ENCODE measurements at regions of chr11 and their contacts with region 1.

Region 1: DNA sequence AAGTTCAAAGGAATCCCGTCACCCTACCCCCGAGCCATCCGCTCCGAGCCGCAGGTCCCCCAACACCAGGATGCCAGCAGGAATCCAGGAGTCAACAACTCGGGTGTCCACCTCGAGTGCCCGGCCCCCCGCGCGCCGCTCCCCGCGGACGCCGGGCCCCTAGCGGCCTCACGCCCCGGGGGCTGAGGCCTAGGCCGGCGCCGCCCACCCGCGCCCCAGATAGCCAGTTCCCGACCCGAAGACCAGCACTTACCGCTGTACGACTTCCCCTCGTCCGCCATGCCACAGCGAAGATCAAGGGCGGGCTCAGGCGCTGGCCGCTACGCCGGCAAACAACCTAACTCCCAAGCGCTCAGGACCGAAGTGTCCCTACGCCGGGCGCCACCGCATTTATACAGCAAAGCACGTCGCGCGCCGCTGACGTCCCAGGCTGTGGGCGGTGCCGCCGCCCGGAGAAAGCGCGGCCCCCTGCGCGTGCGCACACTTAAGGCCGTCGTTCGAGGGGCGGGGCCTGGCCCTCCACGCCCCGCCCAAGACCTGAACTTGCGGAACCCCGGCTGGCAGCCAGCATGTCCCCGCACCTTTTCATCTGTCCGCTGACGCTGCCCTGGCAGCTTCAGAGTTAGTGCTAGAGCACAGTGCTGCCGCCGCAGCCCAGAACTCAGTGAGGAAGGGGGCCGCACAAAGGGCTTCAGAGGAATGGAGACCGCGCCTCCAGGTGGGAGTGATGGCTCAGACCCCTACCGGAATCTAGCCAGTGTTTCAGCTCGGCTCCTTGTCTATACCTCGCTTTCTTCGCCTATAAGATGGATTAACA is at the start of gene NXF1:
- DNase-seq: peak; percentile 93 to 97 (median 96)
- H3K4me3 ChIP-seq: peak within 1 kb of the TSS; percentile 82 to 99 (median 93)
- H3K27ac ChIP-seq: peak within 1 kb of the TSS; percentile 79 to 91
- H3K4me1 ChIP-seq: peaks cover 11 to 45% (median 24%) of the 10 kb centered on the region in 4 experiments
- H3K27me3 ChIP-seq: no peaks in the 10 kb centered on the region

Region 2: DNA sequence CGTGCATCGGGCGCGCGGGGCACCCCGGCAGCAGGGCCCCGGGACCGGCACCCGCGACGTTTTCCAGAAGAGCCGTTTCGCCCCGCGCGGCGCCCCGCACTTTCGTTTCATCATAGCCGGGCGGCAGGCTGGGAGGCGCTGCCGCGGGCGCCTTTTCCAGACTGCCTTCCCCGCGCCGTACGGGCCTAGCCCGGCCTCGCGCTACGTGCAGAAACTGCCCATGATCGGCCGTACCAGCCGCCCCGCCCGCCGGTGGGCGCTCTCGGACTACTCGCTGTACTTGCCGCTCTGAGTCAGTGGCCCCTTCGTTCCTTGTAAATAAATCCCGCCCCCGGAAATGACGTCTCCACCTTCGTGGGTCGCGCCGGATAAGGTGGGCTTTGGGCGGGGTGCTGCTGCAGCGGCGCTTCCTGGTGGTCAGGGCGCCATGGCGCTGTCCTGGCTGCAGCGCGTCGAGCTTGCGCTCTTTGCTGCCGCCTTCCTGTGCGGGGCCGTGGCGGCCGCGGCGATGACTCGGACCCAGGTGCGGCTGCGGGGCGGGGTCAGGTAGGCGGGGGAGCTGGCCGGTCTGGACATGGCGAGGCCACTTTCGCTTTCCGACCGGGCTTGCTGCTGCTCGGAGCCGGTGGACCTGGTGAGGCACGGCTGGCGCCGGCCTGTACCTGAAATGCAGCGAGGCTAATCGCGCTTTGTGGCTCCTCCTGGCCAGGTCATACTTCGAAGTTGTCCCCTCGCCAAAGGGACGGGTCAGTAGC is 18.1 kb before region 1 on chr11 and contains the start of gene TMEM179B:
- CTCF ChIA-PET with region 1: interaction called, 15 read pairs
- POLR2A ChIA-PET with region 1: interaction called, 11 read pairs
- DNase-seq: peak; percentile 98 to 99 (median 99)
- H3K4me3 ChIP-seq: peak within 1 kb of the TSS; percentile 75 to 100 (median 97)
- H3K27ac ChIP-seq: peak within 1 kb of the TSS; percentile 72 to 88
- H3K4me1 ChIP-seq: peaks cover 10 to 48% (median 40%) of the 10 kb centered on the region in 4 experiments
- H3K27me3 ChIP-seq: no peaks in the 10 kb centered on the region

Region 3: DNA sequence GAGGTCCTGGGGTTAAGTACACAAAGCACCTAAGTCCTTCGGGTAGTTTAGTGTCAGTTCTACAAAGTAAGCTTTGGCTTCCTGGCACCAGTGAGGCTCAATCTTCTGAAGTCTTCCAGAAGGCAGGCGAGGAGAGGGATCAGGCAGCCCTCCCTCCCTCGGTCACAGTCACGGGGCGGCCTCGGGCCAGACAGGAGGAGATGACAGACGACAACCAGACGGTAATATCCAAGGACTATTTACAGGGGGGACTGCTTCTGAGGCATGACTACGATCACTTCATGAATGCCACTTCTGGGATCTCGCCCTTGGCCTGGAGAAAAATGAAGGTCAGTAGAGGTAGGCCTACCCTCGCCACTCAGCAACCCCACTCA is 13.1 kb before region 1 on chr11:
- CTCF ChIA-PET with region 1: interaction called, 15 read pairs
- POLR2A ChIA-PET with region 1: interaction called, 16 read pairs
- DNase-seq: no peak
- H3K4me3 ChIP-seq: peak overlapping the region in 6 of 7 experiments; percentile 53 to 98 (median 92)
- H3K27ac ChIP-seq: peak overlapping the region; percentile 66 to 88
- H3K4me1 ChIP-seq: peaks cover 8 to 44% (median 38%) of the 10 kb centered on the region in 4 experiments
- H3K27me3 ChIP-seq: no peaks in the 10 kb centered on the region

Region 4: GRCh38 chr11:62816557-62816956 is 11.3 kb after region 1 on chr11:
- CTCF ChIA-PET with region 1: interaction called, 15 read pairs
- POLR2A ChIA-PET with region 1: interaction called, 6 read pairs
- DNase-seq: no peak
- H3K4me3 ChIP-seq: no peak overlapping the region
- H3K27ac ChIP-seq: no peak overlapping the region
- H3K4me1 ChIP-seq: no peaks in the 10 kb centered on the region
- H3K27me3 ChIP-seq: no peaks in the 10 kb centered on the region

Region 5: GRCh38 chr11:62823677-62824076 is 18.4 kb after region 1 on chr11:
- CTCF ChIA-PET with region 1: interaction called, 6 read pairs
- POLR2A ChIA-PET with region 1: interaction called, 11 read pairs
- DNase-seq: no peak
- H3K4me3 ChIP-seq: no peak overlapping the region
- H3K27ac ChIP-seq: no peak overlapping the region
- H3K4me1 ChIP-seq: no peaks in the 10 kb centered on the region
- H3K27me3 ChIP-seq: no peaks in the 10 kb centered on the region

Region 6: DNA sequence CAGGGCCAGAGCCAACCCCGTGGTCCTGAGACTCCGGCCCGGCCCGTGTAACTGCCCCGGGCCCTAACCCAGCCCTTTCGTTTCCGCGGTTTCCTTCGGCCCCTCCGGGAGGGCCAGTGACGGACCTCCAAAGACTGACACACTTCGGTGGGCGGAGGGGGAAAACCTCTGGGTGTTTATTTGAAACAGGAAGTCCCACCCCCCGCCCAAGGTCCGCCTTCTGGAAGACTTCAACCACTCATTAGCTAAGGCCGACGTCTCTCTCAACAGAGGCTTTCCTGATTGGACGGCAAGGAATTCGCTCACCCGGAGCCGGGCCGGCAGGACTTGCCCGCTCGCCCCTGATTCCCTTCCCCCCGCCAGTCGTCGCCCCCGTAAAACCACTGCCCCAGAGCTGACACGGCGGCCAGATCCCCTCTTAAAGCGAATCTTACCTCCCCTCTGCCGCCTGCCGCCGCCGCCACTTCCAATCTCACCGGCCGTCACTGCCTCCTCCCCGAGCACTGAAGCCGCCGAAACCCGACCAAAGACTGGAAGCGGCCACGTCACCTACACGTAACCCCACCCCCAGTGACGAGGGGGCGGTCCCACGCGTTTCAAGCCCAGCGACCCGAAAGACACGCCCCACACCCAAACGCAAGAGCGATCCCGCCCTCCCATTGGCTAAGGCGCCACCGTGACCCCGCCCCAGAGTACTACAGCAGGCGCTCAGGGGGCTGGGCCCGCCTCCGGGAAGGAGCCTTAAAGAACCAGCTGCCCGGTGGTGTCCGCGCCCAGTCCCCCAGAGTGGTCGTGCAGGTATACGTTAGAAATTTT is 26.4 kb after region 1 on chr11 and contains the start of gene STX5:
- CTCF ChIA-PET with region 1: interaction called, 6 read pairs
- POLR2A ChIA-PET with region 1: interaction called, 18 read pairs
- DNase-seq: peak; percentile 98 to 99 (median 99)
- H3K4me3 ChIP-seq: peak within 1 kb of the TSS; percentile 71 to 93 (median 89)
- H3K27ac ChIP-seq: peak within 1 kb of the TSS; percentile 95 to 96
- H3K4me1 ChIP-seq: peaks cover 8 to 28% (median 19%) of the 10 kb centered on the region in 4 experiments
- H3K27me3 ChIP-seq: no peaks in the 10 kb centered on the region

Region 7: GRCh38 chr11:62847767-62848314 is 42.6 kb after region 1 on chr11:
- CTCF ChIA-PET with region 1: no interaction called
- POLR2A ChIA-PET with region 1: no interaction called
- DNase-seq: no peak
- H3K4me3 ChIP-seq: no peak overlapping the region
- H3K27ac ChIP-seq: no peak overlapping the region
- H3K4me1 ChIP-seq: peaks cover 0 to 9% (median 2%) of the 10 kb centered on the region in 4 experiments
- H3K27me3 ChIP-seq: no peaks in the 10 kb centered on the region

Measured in common myeloid progenitor, CD34-positive (primary cell).